AG04449 (cell line): ENCODE measurements at regions of chr1 and their contacts with region 1.

Region 1: GRCh38 chr1:183467687-183468086 is 4.6 kb upstream of the SMG7 start:
- DNase-seq: no peak
- H3K4me3 ChIP-seq: no peak overlapping the region
- CTCF ChIP-seq: no peak

Region 2: DNA sequence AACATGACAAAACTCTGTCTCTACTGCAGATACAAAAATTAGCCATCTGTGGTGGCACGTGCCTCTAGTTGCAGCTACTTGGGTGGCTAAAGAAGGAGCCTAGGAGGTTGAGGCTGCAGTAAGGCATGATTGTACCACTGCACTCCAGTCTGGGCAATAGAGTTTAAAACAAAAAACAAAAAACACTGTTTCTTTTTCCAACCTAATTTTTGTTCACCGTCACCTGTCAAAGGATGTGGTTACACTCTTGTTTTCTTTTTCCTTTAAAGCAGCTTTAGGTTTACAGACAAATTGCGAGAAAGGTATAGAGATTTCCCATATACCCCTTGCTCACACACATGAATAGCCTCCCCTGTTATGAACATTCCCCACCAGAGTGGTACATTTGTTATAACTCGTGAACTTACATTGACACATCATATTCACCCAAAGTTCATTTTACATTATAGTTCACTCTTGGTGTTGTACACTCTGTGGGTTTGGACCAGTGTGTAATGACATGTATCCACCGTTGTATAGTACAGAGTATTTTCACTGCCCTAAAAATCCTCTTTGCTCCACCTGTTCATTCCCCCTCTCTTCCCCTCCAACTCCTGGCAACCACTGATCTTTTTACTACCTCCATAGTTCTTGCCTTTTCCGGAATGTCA is 30.8 kb after region 1 on chr1:
- CTCF ChIA-PET with region 1: no interaction called
- POLR2A ChIA-PET with region 1: no interaction called
- DNase-seq: no peak
- H3K4me3 ChIP-seq: no peak overlapping the region
- CTCF ChIP-seq: no peak

Region 3: DNA sequence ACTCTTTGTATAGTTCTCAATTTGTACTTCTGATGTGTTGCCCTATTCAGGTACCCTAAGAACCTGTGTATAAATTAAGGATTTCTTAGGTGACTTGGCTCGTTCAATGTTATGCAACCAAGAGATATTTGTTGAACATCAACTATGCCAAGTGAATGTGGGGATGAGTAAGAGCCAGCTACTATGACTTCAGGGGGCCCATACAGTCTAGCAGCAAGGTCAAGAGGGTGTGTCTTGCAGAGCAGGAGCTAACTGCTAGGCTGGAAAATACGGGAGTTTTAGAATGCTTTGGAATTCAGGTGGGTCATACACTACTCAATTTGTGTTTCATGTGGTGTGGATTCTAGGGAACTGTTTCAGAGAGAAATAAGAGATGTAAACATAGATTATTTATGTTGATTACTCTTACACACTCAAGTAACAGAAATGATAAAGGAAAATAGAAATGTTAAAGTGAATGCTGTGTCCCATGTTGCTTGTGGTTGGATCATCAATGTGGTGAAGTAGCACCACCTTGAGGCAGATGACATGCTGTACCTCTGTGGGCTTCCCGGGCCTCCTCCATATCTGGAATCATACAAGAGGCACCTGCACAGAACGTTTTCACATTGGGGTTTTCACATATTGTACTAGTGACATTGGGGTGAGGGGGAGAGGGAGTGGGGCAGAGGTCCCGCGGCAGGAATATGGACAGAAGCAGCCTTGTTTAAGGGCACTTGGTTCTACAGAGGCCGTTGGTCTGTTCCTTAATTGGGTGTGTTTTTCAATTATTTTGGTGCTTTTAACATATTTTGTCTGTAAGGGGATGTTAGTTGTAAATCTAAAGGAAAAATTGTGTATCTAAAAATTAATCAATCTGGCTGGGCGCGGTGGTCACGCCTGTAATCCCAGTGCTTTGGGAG is 155.4 kb after region 1 on chr1:
- CTCF ChIA-PET with region 1: interaction called, 10 read pairs
- POLR2A ChIA-PET with region 1: interaction called, 3 read pairs
- DNase-seq: no peak
- H3K4me3 ChIP-seq: no peak overlapping the region
- CTCF ChIP-seq: peak; percentile 67